PC-3 (cell line): ENCODE measurements at regions of chr10 and their contacts with region 1.

Region 1: GRCh38 chr10:11715815-11716494 is 26.2 kb upstream of the ECHDC3 start:
- DNase-seq: peak; percentile 90
- ATAC-seq: peak; percentile 94
- H3K4me3 ChIP-seq: 0 out of 2 replicates have a peak overlapping the region, but pooled peaks have one; percentile 18
- H3K27ac ChIP-seq: peak overlapping the region; percentile 100
- H3K4me1 ChIP-seq: peaks cover 28% of the 10 kb centered on the region
- H3K27me3 ChIP-seq: no peaks in the 10 kb centered on the region
- CTCF ChIP-seq: no peak

Region 2: GRCh38 chr10:11611248-11612020 is 104.5 kb before region 1 on chr10 and contains the start of gene USP6NL:
- CTCF ChIA-PET with region 1: no interaction called
- POLR2A ChIA-PET with region 1: interaction called, 3 read pairs
- intact Hi-C with region 1: loop called (anchors 1 kb)
- DNase-seq: peak; percentile 74
- ATAC-seq: peak; percentile 89
- H3K4me3 ChIP-seq: peak within 1 kb of the TSS; percentile 75
- H3K27ac ChIP-seq: peak within 1 kb of the TSS; percentile 34; the same call in 1 of the 2 replicates
- H3K4me1 ChIP-seq: peaks cover 14% of the 10 kb centered on the region; the same call in 1 of the 2 replicates
- H3K27me3 ChIP-seq: no peaks in the 10 kb centered on the region
- CTCF ChIP-seq: no peak
- total RNA-seq, gene USP6NL: 13.0 and 14.3 TPM in 2 replicates

Region 3: DNA sequence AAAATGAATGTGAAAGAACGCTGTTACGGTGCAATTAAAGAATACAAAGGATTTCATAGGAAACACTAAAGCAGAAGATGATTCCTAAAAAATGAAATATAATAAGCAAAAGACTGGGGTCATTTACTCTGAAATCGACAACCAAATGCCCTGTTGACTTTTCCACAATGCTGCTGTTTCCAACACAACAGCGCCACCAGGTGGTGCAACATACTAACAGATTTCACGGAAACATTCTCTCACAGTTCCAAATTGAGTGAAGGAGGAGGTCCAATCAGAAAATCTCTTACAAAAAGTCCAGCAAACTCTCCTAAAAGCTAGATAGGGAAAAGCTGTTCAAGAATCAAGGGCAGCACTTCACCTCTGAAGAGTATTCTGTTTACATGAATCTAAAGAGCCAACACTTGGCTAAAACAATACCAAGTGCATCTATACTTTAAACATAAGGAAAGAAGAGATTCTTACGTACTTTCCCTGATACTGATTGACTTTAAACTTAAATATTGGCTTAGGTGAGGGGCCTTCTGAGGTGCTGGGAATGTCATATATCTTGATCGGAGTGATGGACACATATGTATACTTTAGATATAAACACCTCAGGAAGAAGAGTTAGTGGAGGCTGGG is 270.8 kb after region 1 on chr10:
- CTCF ChIA-PET with region 1: no interaction called
- POLR2A ChIA-PET with region 1: no interaction called
- intact Hi-C with region 1: no loop called
- DNase-seq: peak; percentile 76
- ATAC-seq: peak; percentile 62
- H3K4me3 ChIP-seq: no peak overlapping the region
- H3K27ac ChIP-seq: peak overlapping the region; percentile 58
- H3K4me1 ChIP-seq: peaks cover 5% of the 10 kb centered on the region; the same call in 1 of the 2 replicates
- H3K27me3 ChIP-seq: no peaks in the 10 kb centered on the region
- CTCF ChIP-seq: peak; percentile 82